Panc1 (cell line): ENCODE measurements at regions of chr15 and their contacts with region 1.

Region 1: GRCh38 chr15:65286704-65287519 is at the start of gene PARP16:
- DNase-seq: no peak
- ATAC-seq: peak; percentile 98
- H3K4me3 ChIP-seq: peak within 1 kb of the TSS; percentile 64 to 83
- H3K27ac ChIP-seq: peak within 1 kb of the TSS; percentile 93
- H3K4me1 ChIP-seq: peaks cover 13% of the 10 kb centered on the region
- H3K27me3 ChIP-seq: no peaks in the 10 kb centered on the region
- CTCF ChIP-seq: peak; percentile 67; the same call in 1 of the 2 replicates
- total RNA-seq, gene PARP16: 15.4 TPM

Region 2: GRCh38 chr15:64930778-64931371 is 356.0 kb before region 1 on chr15:
- CTCF ChIA-PET with region 1: no interaction called
- POLR2A ChIA-PET with region 1: no interaction called
- in situ Hi-C with region 1: no loop called
- intact Hi-C with region 1: no loop called
- DNase-seq: no peak
- ATAC-seq: no peak
- H3K4me3 ChIP-seq: no peak overlapping the region
- H3K27ac ChIP-seq: no peak overlapping the region
- H3K4me1 ChIP-seq: no peaks in the 10 kb centered on the region
- H3K27me3 ChIP-seq: no peaks in the 10 kb centered on the region
- CTCF ChIP-seq: no peak

Region 3: GRCh38 chr15:65184868-65185738 is 101.8 kb before region 1 on chr15 and contains the start of gene CLPX:
- CTCF ChIA-PET with region 1: no interaction called
- POLR2A ChIA-PET with region 1: interaction called, 12 read pairs
- in situ Hi-C with region 1: no loop called
- intact Hi-C with region 1: no loop called
- DNase-seq: peak; percentile 89
- ATAC-seq: peak; percentile 95
- H3K4me3 ChIP-seq: peak within 1 kb of the TSS; percentile 83 to 85
- H3K27ac ChIP-seq: peak within 1 kb of the TSS; percentile 90
- H3K4me1 ChIP-seq: peaks cover 6% of the 10 kb centered on the region; the same call in 1 of the 2 replicates
- H3K27me3 ChIP-seq: no peaks in the 10 kb centered on the region
- CTCF ChIP-seq: no peak
- total RNA-seq, gene CLPX: 49.9 TPM

Region 4: GRCh38 chr15:65223996-65224395 is 62.9 kb before region 1 on chr15:
- CTCF ChIA-PET with region 1: interaction called, 10 read pairs
- POLR2A ChIA-PET with region 1: interaction called, 6 read pairs
- in situ Hi-C with region 1: no loop called
- intact Hi-C with region 1: no loop called
- DNase-seq: no peak
- ATAC-seq: no peak
- H3K4me3 ChIP-seq: no peak overlapping the region
- H3K27ac ChIP-seq: no peak overlapping the region
- H3K4me1 ChIP-seq: no peaks in the 10 kb centered on the region
- H3K27me3 ChIP-seq: no peaks in the 10 kb centered on the region
- CTCF ChIP-seq: no peak

Region 5: GRCh38 chr15:65275728-65276126 is 11.2 kb before region 1 on chr15:
- CTCF ChIA-PET with region 1: no interaction called
- POLR2A ChIA-PET with region 1: interaction called, 14 read pairs
- in situ Hi-C with region 1: no loop called
- intact Hi-C with region 1: no loop called
- DNase-seq: no peak
- ATAC-seq: no peak
- H3K4me3 ChIP-seq: no peak overlapping the region
- H3K27ac ChIP-seq: no peak overlapping the region
- H3K4me1 ChIP-seq: no peaks in the 10 kb centered on the region
- H3K27me3 ChIP-seq: no peaks in the 10 kb centered on the region
- CTCF ChIP-seq: no peak

Region 6: GRCh38 chr15:66497502-66498455 is 1210.9 kb after region 1 on chr15 and contains the start of gene SNAPC5:
- CTCF ChIA-PET with region 1: interaction called, 16 read pairs
- POLR2A ChIA-PET with region 1: no interaction called
- in situ Hi-C with region 1: no loop called
- intact Hi-C with region 1: no loop called
- DNase-seq: peak; percentile 87
- ATAC-seq: peak; percentile 92
- H3K4me3 ChIP-seq: peak within 1 kb of the TSS; percentile 76 to 99
- H3K27ac ChIP-seq: peak within 1 kb of the TSS; percentile 93
- H3K4me1 ChIP-seq: peaks cover 47% of the 10 kb centered on the region
- H3K27me3 ChIP-seq: no peaks in the 10 kb centered on the region
- CTCF ChIP-seq: peak; percentile 99
- total RNA-seq, gene SNAPC5: 36.4 TPM